Endothelial cell of umbilical vein (primary cell): ENCODE measurements at regions of chrX and their contacts with region 1.

Region 1: DNA sequence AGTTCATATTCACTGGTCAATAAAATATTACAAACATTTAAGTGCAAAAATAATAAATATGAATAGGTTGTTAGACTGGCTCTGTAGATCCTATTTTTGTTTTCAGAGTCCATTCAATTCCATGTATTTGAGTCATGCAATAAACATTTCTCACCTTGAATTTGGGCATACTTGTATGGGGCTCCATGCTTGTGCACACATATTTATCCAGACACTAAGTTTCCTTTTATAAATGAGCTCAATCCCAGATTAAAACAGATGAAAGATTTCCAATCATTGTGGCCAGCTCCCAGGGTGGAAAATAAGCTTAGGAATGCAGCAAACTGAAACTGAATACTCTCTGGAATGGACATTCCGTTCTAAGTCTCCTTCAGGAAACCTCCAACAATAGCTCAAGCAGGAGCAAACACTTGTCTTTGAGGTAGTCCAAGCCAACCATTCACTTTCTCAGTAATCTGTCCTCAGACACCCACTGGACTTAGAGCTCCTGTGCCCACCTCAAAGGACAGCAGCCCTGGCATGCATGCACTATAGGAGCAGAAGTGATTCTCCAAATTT is 16.4 kb downstream of the DMD start:
- DNase-seq: peak; percentile 62
- H3K4me3 ChIP-seq: no peak overlapping the region
- H3K27ac ChIP-seq: peak overlapping the region; percentile 83
- H3K4me1 ChIP-seq: no peaks in the 10 kb centered on the region
- H3K27me3 ChIP-seq: no peaks in the 10 kb centered on the region
- CTCF ChIP-seq: no peak
- POLR2A ChIP-seq: no peak

Region 2: DNA sequence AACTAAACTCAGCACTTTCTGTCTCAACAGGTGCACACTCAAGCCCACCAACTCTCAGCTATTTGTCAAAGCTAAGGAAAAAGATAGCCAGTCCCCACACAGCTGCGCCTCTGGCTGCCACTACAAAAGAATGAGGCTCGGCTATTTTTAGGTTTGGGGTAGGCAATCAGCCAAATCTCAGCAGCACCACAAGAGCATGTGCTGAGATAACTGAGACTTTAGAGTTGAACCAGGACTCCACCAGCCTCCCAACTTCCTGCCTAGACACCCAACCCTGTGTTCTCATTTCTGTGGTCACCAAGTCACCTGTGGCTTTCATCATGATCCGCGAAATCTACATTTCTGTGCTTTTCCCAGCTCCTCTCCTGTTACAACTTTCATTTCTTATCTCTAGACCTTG is 11.6 kb before region 1 on chrX:
- CTCF ChIA-PET with region 1: interaction called, 5 read pairs
- POLR2A ChIA-PET with region 1: no interaction called
- dilution Hi-C with region 1: no loop called
- intact Hi-C with region 1: loop called (anchors 1 kb)
- DNase-seq: peak; percentile 81
- H3K4me3 ChIP-seq: no peak overlapping the region
- H3K27ac ChIP-seq: peak overlapping the region; percentile 40
- H3K4me1 ChIP-seq: peaks cover 9% of the 10 kb centered on the region
- H3K27me3 ChIP-seq: no peaks in the 10 kb centered on the region
- CTCF ChIP-seq: no peak
- POLR2A ChIP-seq: no peak